GM10248 (cell line): ENCODE measurements at regions of chr9 and their contacts with region 1.

Region 1: DNA sequence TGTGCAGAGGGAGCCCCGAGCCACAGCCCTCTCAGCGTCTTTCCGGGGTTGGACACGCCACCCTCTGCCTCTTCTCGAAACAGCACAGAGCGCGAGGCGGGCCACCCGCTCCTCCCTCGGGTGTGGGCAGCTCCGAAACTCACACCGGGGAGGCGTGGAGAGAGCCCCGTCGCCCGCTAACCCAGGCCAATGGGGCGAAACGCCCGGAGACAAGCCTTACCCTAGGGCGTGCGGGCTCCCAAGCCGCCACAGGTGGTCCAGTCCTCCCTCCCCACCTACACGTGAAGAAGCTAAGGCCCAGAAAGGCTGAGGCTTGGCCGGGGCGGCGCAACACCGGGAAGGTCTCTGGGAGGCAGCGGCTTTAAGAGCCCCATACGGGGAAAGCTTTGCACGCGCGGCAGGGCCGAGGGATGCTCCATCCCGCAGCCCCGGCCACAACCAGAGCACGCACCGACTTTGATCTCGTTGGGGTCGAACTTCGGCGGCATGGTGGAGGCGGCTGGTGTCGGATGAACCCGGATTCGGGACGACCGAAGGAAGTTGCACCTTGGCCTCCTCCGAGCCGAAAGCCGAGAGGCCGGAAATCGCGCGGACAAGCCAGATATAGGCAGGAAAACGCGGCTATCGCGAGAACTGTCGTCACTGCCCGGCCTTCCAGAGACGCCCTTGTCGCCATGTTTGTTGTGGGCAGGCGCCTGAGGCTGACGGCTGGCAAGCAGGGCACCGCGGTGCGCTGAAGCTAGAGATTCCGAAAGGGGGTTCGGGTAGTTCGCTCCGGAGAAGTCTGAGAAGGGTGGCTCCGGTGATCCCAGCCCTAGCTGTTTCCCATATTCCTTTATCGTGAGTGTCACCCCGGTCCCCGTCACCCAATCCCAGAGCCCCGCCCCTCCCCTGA is at the starts of genes LRSAM1 and RPL12:
- DNase-seq: peak; percentile 97
- CTCF ChIP-seq: no peak

Region 2: DNA sequence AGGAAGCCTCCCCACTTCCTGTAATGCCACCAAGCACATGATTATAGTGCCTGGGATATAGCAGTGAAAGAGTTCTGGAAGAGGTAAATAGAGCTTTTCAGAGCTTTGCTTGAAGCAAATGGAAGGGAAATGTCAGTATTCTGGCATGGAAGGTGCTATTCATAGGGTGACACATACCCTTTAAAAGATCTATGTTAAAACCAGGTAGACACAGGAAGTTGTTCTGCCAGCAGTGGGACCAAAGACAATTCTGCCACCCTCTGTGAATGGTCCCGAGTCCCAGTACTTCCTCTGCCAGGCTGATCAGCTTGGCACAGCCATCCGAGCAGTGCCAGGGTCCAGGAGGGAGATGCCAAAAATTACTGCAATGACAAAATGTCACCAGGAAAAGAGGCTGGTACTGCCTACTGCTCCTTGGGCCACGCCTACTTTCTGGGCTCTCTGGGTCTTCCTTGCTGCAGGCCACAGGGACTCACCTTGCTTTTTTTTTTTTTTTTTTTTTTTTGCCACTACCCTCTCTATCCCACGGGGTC is 159.8 kb before region 1 on chr9:
- CTCF ChIA-PET with region 1: no interaction called
- POLR2A ChIA-PET with region 1: interaction called, 10 read pairs
- DNase-seq: no peak
- CTCF ChIP-seq: no peak

Region 3: GRCh38 chr9:127384901-127385300 is 66.2 kb before region 1 on chr9:
- CTCF ChIA-PET with region 1: no interaction called
- POLR2A ChIA-PET with region 1: no interaction called
- DNase-seq: no peak
- CTCF ChIP-seq: no peak

Region 4: DNA sequence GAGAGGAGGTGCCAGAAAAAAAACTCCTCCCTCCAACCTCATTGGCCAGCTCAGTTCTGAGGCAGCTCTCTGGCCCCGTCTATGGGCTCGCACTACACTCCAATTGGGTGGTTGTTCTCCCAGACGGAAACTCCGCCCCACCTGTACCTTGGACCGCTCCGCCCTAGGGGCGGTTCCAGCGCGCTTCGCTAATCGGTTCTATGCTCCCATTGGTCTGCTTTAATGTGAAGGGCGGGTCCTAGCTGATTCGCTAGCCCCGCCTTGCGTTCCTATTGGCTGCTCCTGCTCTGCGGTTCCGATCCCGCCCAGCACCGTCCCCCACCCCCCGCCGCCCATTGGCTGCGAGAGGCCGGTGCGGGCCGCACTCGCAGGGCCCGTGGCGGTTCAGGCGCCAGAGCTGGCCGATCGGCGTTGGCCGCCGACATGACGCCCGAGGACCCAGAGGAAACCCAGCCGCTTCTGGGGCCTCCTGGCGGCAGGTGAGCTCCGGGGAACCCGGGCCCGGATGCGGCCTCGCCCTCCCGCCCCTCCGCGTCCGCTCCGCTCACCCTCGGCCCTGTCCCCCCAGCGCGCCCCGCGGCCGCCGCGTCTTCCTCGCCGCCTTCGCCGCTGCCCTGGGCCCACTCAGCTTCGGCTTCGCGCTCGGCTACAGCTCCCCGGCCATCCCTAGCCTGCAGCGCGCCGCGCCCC is 54.1 kb before region 1 on chr9 and contains the start of gene SLC2A8:
- CTCF ChIA-PET with region 1: no interaction called
- POLR2A ChIA-PET with region 1: interaction called, 22 read pairs
- DNase-seq: peak; percentile 97
- CTCF ChIP-seq: no peak

Region 5: DNA sequence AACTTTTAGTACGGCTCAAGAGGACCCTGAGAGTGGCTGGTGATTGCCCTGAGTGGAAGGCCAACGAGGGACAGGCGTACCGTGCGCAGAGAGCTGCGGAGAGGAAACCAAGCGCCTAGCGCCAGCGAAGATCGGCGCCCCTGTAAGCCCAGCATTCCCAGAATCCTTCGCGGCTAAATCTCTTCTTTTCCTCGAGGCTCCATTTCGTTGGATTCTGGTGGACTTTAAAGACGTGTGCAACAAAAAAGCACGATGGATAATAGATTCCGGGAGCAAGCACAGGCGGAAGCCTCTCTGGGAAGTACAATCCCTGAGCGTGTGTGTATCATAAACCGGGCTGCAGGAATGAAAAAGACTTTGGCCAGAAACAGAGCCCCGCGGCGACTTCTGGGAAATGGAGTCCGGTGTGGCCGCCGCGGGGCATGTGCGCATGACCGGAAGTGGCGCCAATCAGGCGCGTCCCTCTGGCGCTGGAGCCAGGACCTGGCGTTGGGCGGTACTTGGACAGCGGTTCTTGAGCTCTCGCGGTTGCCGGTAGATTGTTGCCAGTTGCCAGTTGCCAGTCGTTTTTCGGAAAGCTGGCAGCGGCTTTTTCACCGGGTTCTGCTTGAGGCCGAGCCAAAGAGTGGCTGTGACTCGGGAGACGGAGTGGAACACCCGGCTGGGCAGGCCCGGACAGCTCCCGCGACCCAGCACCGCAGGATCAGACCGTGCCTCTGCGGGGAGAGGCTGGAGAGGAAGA is 27.0 kb before region 1 on chr9 and contains the start of gene ZNF79:
- CTCF ChIA-PET with region 1: interaction called, 3 read pairs
- POLR2A ChIA-PET with region 1: interaction called, 12 read pairs
- DNase-seq: peak; percentile 96
- CTCF ChIP-seq: no peak

Region 6: GRCh38 chr9:127503947-127504782 is 53.1 kb after region 1 on chr9:
- CTCF ChIA-PET with region 1: no interaction called
- POLR2A ChIA-PET with region 1: no interaction called
- DNase-seq: peak; percentile 78
- CTCF ChIP-seq: peak; percentile 92

Region 7: DNA sequence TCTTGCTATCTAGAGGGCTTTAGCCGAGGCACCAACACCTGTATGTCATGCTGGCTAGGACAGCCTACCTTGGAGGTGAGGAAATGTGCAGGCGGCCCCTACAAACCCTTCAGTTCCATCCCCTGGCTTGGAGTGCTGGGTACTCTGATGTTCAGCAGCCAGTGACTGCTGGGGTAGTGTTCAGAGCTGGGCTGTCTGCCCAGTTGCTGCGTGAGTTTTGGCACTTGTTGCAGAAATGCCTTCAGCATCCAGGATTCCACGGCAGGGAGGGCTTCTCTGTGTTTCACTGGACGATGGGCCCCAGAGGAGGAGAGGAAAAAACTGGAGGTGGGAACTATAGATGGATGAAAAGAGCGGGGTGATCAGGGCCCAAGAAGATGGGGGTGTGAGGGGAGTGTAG is 835.4 kb after region 1 on chr9:
- CTCF ChIA-PET with region 1: no interaction called
- POLR2A ChIA-PET with region 1: interaction called, 11 read pairs
- DNase-seq: no peak
- CTCF ChIP-seq: no peak